ENCODE measurements at regions of chr2 and their contacts with region 1.

Region 1: DNA sequence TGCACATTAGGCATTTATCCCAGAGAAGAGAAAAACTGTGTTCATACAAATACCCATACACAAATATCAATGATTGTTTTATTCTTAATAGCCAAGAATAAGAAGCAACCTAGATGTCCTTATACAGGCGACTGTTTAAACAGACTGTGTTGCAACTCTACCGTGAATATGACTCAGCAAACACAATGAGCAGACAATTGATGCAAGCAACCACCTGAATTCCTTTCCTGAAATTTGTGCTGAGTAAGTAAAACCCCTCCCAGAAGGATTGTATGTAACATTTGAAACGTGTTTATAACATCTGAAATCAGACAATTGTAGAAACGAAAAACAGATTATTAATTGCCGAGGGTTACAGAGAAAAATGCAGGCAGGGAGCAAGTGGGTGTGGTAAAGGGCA is 621.9 kb upstream of the SOX11 start:
- DNase-seq: no peak
- H3K4me3 ChIP-seq: no peak overlapping the region
- H3K27ac ChIP-seq: no peak overlapping the region
- H3K4me1 ChIP-seq: no peaks in the 10 kb centered on the region
- H3K27me3 ChIP-seq: no peaks in the 10 kb centered on the region
- CTCF ChIP-seq: no peak

Region 2: GRCh38 chr2:3823748-3824147 is 1246.5 kb before region 1 on chr2:
- intact Hi-C with region 1: loop called (anchors 5 kb)
- DNase-seq: no peak
- H3K4me3 ChIP-seq: no peak overlapping the region
- H3K27ac ChIP-seq: no peak overlapping the region
- H3K4me1 ChIP-seq: no peaks in the 10 kb centered on the region
- H3K27me3 ChIP-seq: no peaks in the 10 kb centered on the region
- CTCF ChIP-seq: no peak

Region 3: DNA sequence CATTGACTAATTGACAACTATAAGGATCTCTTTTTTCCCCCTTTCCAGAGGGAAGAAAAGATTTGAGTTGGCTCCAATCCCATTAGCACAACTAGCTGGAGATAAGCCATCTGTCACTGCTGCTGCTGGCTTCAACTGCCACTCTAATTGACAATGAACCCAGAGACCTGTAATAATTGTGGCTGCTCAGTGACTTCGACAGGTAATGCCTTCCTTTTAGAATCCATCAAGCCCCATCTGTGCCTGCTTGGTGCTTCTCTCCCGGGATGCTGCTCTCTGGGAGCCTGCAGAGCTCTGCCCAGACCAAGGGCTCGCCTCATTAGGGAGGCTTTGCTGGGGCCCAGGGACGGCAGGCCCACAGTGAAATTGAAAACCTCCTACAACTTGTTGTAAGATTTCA is 245.3 kb after region 1 on chr2:
- intact Hi-C with region 1: no loop called
- DNase-seq: no peak
- H3K4me3 ChIP-seq: no peak overlapping the region
- H3K27ac ChIP-seq: no peak overlapping the region
- H3K4me1 ChIP-seq: no peaks in the 10 kb centered on the region
- H3K27me3 ChIP-seq: no peaks in the 10 kb centered on the region
- CTCF ChIP-seq: no peak